ENCODE measurements at regions of chr15 and their contacts with region 1.

Region 1: GRCh38 chr15:78872972-78873792 is 492 bp downstream of the MORF4L1 start:
- DNase-seq: peak; percentile 66 to 84
- H3K4me3 ChIP-seq: peak overlapping the region; percentile 92 to 96
- H3K27ac ChIP-seq: peak overlapping the region; percentile 99 to 100
- H3K4me1 ChIP-seq: peaks cover 0 to 43% (median 32%) of the 10 kb centered on the region in 4 donors
- H3K27me3 ChIP-seq: no peaks in the 10 kb centered on the region
- CTCF ChIP-seq: peak; percentile 5 to 11

Region 2: DNA sequence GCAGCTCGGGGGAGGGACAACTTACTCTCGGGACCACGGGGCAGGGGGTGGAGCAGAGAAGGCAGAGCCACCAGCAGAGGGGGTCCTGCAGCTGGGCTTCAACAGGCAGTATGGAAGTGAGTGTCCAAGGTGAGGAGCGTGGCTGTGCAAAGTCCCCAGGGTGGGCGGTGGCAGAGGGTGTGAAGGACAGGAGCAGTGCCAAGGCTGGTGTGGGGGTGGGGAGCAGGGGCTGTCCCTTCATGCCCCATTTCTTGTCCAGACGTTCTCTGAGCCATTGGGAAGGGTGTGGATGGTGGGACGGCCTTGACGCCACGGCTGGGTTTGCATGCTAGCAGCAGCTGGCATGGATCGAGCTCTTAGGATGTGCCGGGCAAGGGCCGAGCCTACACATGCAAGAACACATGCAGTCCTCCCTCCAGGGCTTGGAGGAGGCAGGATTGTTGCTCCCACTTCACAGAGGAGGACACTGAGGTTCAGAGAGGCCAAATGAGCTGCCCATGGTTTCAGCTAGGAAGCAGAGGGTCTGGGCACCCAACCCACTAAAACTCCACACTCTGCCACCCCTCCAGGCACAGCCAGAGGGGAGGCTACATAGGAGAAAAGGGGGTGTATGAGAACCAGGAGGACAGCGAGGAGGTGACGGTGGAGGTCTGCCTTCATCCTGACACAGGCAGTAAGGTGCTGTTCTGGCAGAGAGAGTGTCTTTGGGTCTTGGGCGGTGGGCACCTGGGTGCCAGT is 889.3 kb before region 1 on chr15:
- intact Hi-C with region 1: loop called (anchors 5 kb)
- DNase-seq: peak in 1 of 2 donors; percentile 65
- H3K4me3 ChIP-seq: no peak overlapping the region
- H3K27ac ChIP-seq: no peak overlapping the region
- H3K4me1 ChIP-seq: peaks cover 0 to 12% (median 9%) of the 10 kb centered on the region in 4 donors
- H3K27me3 ChIP-seq: peaks cover 0 to 9% of the 10 kb centered on the region in 2 donors
- CTCF ChIP-seq: no peak

Region 3: GRCh38 chr15:78264304-78265136 is 608.7 kb before region 1 on chr15 and contains the start of gene DNAJA4:
- intact Hi-C with region 1: loop called (anchors 10 kb)
- DNase-seq: peak; percentile 53 to 73
- H3K4me3 ChIP-seq: peak within 1 kb of the TSS; percentile 60 to 66
- H3K27ac ChIP-seq: peak within 1 kb of the TSS; percentile 68 to 70
- H3K4me1 ChIP-seq: peaks cover 0 to 29% (median 20%) of the 10 kb centered on the region in 4 donors
- H3K27me3 ChIP-seq: no peaks in the 10 kb centered on the region
- CTCF ChIP-seq: no peak

Region 4: GRCh38 chr15:78750566-78750965 is 122.6 kb before region 1 on chr15:
- intact Hi-C with region 1: loop called (anchors 10 kb)
- DNase-seq: peak in 1 of 2 donors; percentile 22
- H3K4me3 ChIP-seq: peak overlapping the region; percentile 31 to 38
- H3K27ac ChIP-seq: peak overlapping the region; percentile 24 to 57
- H3K4me1 ChIP-seq: peaks cover 0 to 16% (median 4%) of the 10 kb centered on the region in 4 donors
- H3K27me3 ChIP-seq: no peaks in the 10 kb centered on the region
- CTCF ChIP-seq: no peak

Region 5: DNA sequence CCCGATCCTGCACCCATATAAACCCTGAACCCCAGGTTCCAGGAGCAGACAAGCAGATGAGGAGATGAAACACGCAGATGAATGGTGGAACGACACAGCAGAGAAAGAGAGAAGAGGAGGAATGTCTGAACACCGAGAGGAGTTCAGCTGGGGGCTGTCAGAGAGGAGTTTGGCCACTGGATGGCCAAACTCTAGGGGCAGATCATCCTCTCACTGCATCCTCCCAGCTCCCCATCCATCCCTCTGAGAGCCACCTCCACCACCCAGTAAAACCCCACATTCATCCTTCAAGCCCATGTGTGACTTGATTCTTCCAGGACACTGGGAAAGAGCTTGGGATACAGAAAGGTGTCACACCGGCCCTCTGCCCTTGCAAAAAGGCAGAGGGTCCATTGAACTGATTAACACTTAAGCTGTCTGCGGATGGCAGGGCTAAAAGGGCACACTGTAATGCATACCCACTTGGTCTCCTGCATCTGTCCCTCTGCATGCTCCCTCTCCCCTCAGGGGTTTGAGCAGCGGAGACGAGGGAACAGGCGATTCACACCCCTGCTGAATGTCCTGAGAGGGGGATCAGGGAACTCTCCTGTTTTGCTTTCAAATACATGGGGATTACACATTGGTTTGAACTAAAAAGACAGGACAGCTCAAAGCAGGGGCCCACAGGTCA is 491.5 kb after region 1 on chr15:
- intact Hi-C with region 1: no loop called
- DNase-seq: no peak
- H3K4me3 ChIP-seq: no peak overlapping the region
- H3K27ac ChIP-seq: no peak overlapping the region
- H3K4me1 ChIP-seq: no peaks in the 10 kb centered on the region
- H3K27me3 ChIP-seq: no peaks in the 10 kb centered on the region
- CTCF ChIP-seq: no peak